ENCODE measurements at regions of chr1 and their contacts with region 1.

Region 1: DNA sequence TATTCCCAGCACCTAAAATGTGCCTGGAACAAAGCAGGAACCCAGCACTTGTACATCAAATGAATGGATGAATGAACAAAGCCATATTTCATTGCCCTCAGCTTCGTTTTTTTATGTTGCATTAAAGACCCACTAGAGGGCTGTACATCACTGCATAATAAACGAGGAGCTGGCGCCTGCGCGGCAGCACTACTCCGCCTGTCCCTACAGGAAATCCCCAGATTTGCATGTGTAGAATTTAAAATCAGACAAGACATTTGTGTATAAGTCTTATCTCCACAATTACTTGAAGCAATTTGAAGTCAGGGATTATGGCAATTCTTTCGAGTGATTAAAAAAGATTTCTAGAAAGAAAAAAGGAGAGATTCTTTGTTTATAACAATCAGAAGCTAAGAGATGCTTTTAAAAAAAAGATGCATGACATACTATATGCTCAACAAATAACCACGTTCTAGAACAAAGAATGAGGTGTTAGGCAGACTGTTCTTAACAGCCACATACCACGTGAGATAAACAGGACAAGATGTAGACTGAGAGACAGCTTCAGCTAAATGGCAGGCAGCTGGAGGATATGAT is 5.4 kb upstream of the NEK2 start:
- DNase-seq: peak; percentile 64
- H3K4me3 Mint-ChIP-seq: no peak overlapping the region
- H3K27ac Mint-ChIP-seq: peak overlapping the region; percentile 86
- H3K4me1 Mint-ChIP-seq: peaks cover 14% of the 10 kb centered on the region
- H3K27me3 Mint-ChIP-seq: no peaks in the 10 kb centered on the region

Region 2: GRCh38 chr1:211830330-211831142 is 149.7 kb after region 1 on chr1 and contains the start of gene LPGAT1:
- intact Hi-C with region 1: loop called (anchors 1 kb)
- DNase-seq: peak; percentile 65
- H3K4me3 Mint-ChIP-seq: peak within 1 kb of the TSS; percentile 91
- H3K27ac Mint-ChIP-seq: peak within 1 kb of the TSS; percentile 90
- H3K4me1 Mint-ChIP-seq: peaks cover 69% of the 10 kb centered on the region
- H3K27me3 Mint-ChIP-seq: peaks cover 2% of the 10 kb centered on the region
- total RNA-seq, gene LPGAT1: 35.3 and 35.6 TPM in 2 replicates

Region 3: DNA sequence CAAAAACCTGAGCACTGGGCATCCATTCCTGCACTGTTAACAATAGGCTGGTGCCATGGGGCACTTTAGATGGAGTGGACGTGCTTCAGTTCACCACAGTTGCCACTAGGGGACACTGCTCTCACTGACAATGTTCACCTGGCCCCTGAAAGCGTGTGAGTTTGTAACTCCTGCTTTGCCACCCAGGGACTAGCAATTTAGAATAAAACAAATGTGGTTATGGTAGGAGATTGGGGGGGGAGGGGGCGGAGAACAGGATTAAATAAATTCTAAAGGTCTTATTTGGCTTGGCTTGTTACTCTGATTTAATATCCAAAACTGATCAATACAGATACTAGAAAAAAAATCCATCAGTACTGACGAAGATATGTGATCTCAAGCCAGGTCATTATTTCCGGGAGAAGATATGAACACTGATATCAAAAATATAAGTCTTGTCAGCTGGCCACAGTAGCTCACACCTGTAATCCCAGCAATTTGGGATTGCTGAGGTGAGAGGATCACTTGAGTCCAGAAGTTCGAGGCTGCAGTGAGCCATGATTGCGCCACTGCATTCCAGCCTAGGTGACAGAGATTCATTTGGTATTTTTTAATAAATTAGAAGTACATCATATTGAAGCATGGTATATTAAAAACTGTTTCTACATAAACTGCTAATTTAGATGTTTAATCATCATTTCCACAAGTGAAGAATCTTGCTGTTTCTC is 331.3 kb after region 1 on chr1:
- intact Hi-C with region 1: loop called (anchors 1 kb)
- DNase-seq: peak; percentile 45
- H3K4me3 Mint-ChIP-seq: no peak overlapping the region
- H3K27ac Mint-ChIP-seq: no peak overlapping the region
- H3K4me1 Mint-ChIP-seq: peaks cover 5% of the 10 kb centered on the region
- H3K27me3 Mint-ChIP-seq: no peaks in the 10 kb centered on the region

Region 4: DNA sequence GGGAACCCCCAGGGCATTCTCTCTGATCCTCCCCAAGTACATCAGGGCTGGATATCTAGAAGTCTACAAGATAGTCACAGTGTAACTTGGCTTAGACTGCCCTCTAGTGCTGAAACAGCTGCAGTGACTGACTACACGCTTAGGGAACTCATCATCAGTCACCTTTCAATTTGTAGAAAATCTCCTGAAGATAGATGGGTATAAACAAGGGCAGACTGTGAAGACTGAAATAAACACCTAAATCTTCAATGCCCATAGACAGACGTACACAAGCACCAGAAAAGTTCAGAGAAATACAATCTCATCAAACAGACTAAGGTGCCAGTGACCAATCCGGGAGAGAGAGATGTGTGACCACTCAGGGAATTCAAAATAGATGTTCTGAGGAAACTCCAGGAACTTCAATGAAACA is 687.2 kb after region 1 on chr1:
- intact Hi-C with region 1: loop called (anchors 1 kb)
- DNase-seq: peak; percentile 48
- H3K4me3 Mint-ChIP-seq: no peak overlapping the region
- H3K27ac Mint-ChIP-seq: no peak overlapping the region
- H3K4me1 Mint-ChIP-seq: no peaks in the 10 kb centered on the region
- H3K27me3 Mint-ChIP-seq: no peaks in the 10 kb centered on the region

Region 5: GRCh38 chr1:212414328-212415106 is 733.7 kb after region 1 on chr1 and contains the start of gene PACC1:
- intact Hi-C with region 1: loop called (anchors 2 kb)
- DNase-seq: peak; percentile 88
- H3K4me3 Mint-ChIP-seq: peak within 1 kb of the TSS; percentile 100
- H3K27ac Mint-ChIP-seq: peak within 1 kb of the TSS; percentile 97
- H3K4me1 Mint-ChIP-seq: peaks cover 21% of the 10 kb centered on the region
- H3K27me3 Mint-ChIP-seq: peaks cover 6% of the 10 kb centered on the region
- total RNA-seq, gene PACC1: 17.6 and 19.8 TPM in 2 replicates

Measured in activated T-helper 1 cell treated with anti-CD3 and anti-CD28 coated beads, Interleukin-12 subunit alpha, Interleukin-12 subunit beta, Interleukin-2, Interleukin-4 antibody, amounts not matched to agents 30 ng/mL and 10 ng/mL and 1 ng/mL, durations not matched to agents 14 hours and 24 hours and 36 hours (primary cell).